Transverse colon (tissue), 4 donors: ENCODE measurements at regions of chr6 and their contacts with region 1.

Region 1: GRCh38 chr6:43334466-43335095 is 26.0 kb upstream of the CRIP3 start:
- DNase-seq: no peak
- H3K4me3 ChIP-seq: no peak overlapping the region
- H3K27ac ChIP-seq: peak overlapping the region; percentile 7 to 65 (median 46)
- H3K4me1 ChIP-seq: peaks cover 0 to 26% (median 10%) of the 10 kb centered on the region in 4 donors
- H3K27me3 ChIP-seq: no peaks in the 10 kb centered on the region
- CTCF ChIP-seq: peak; percentile 52 to 81 (median 60)
- EP300 ChIP-seq: no peak
- POLR2A ChIP-seq: no peak

Region 2: DNA sequence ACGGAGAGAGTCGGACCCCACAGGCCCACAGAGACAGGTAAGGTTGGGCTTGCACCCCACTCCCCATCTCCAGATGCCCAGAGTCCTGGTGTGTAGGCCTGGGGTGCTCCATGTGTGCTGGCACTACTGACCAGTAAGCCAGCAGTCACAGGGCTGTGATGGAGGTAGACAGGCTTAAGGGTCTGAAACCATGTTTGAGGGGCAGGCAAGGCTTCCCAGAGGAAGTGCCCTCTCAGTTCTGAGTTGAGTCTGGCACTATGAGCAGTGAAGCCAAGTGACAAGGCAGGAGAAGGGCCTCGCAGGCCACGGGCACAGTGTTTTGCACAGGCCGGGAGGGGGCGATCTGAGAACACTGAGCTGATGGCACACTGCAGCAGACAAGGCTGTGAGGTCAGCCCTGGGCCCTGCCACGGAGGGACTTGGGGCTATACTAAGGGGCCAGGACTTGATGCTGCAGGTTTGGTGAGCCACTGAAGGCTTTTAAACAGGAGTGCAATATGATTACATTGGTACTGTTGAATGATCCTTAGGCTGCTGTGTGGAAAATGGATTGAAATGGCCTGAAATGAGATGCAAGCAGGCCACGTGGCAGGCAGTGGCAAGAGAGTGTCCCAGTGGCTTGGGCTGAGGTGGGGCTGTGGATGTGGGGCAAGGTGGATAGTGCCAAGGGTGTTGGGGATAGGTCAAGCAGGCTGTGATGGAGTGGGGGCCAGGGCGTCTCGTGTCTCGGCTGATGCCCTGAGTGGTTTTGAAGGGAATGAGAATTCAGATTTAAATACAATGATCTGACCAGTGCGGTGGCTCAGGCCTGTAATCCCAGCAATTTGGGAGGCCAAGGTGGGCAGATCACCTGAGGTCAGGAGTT is 71.0 kb before region 1 on chr6:
- in situ Hi-C with region 1: loop called in 1 of 4 experiments (anchors 10 kb)
- intact Hi-C with region 1: loop called (anchors 5 kb)
- DNase-seq: peak; percentile 88
- H3K4me3 ChIP-seq: no peak overlapping the region
- H3K27ac ChIP-seq: no peak overlapping the region
- H3K4me1 ChIP-seq: peaks cover 10 to 16% (median 15%) of the 10 kb centered on the region in 4 donors
- H3K27me3 ChIP-seq: no peaks in the 10 kb centered on the region
- CTCF ChIP-seq: peak; percentile 73 to 89 (median 79)
- EP300 ChIP-seq: no peak
- POLR2A ChIP-seq: no peak